ENCODE measurements at regions of chr9 and their contacts with region 1.

Region 1: GRCh38 chr9:32566770-32567169 is 6.2 kb downstream of the NDUFB6 start:
- DNase-seq: no peak

Region 2: DNA sequence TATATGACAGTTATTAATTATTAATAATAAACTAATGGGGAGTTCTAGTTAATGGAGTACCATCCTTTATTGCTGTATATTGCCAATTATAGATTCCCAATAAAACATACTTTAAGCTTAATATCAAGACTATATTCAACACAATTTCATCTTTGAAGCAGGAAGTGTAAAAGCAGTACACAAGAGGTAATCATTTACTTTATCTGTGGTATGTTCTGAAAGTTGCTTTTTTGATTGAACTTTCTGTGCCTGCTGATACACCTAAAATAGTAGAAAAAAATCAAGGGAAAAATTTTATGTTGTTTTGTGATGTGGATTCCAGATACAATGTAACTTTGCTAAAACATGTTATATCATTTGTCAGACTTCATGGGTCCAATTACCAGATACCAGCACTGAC is 124.3 kb before region 1 on chr9:
- in situ Hi-C with region 1: loop called (anchors 10 kb)
- DNase-seq: no peak

Region 3: GRCh38 chr9:33065157-33066076 is 498.6 kb after region 1 on chr9:
- in situ Hi-C with region 1: no loop called
- DNase-seq: no peak